ENCODE measurements at regions of chr4 and their contacts with region 1.

Region 1: GRCh38 chr4:168923526-168924194 is 86.4 kb downstream of the CBR4 start:
- DNase-seq: peak; percentile 86
- ATAC-seq: peak; percentile 75
- H3K4me3 ChIP-seq: no peak overlapping the region
- H3K27ac ChIP-seq: no peak overlapping the region
- H3K4me1 ChIP-seq: peaks cover 2% of the 10 kb centered on the region; the same call in 1 of the 2 replicates
- H3K27me3 ChIP-seq: no peaks in the 10 kb centered on the region
- CTCF ChIP-seq: peak; percentile 72
- POLR2A ChIP-seq: no peak
- RAD21 ChIP-seq: peak; percentile 76

Region 2: GRCh38 chr4:168605411-168605810 is 318.2 kb before region 1 on chr4:
- CTCF ChIA-PET with region 1: no interaction called
- POLR2A ChIA-PET with region 1: no interaction called
- dilution Hi-C with region 1: no loop called
- in situ Hi-C with region 1: no loop called
- intact Hi-C with region 1: no loop called
- DNase-seq: peak; percentile 83
- ATAC-seq: peak; percentile 86
- H3K4me3 ChIP-seq: no peak overlapping the region
- H3K27ac ChIP-seq: no peak overlapping the region
- H3K4me1 ChIP-seq: peaks cover 4% of the 10 kb centered on the region; the same call in 1 of the 2 replicates
- H3K27me3 ChIP-seq: no peaks in the 10 kb centered on the region
- CTCF ChIP-seq: no peak
- POLR2A ChIP-seq: no peak
- RAD21 ChIP-seq: no peak

Region 3: DNA sequence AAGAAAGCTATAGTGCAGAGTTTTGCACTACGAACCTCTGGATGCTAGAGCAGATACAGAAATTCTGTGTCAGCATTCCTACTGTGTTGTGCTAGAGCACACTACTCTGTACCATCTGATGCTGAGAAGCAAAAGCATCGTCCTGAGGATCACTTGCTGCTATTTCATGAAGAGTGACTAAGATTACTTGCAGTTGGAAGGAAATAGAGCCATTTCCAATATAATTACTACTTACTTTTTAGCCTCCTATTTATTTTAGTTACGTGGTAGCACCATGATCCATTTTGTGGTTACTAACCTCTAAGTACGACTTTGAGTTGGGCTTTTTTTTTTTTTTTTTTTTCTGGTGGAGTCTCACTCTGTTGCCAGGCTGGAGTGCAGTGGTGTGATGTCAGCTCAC is 200.1 kb before region 1 on chr4:
- CTCF ChIA-PET with region 1: no interaction called
- POLR2A ChIA-PET with region 1: interaction called, 14 read pairs
- dilution Hi-C with region 1: no loop called
- in situ Hi-C with region 1: no loop called
- intact Hi-C with region 1: no loop called
- DNase-seq: peak; percentile 56
- ATAC-seq: no peak; the same call in 1 of the 2 replicates
- H3K4me3 ChIP-seq: no peak overlapping the region
- H3K27ac ChIP-seq: no peak overlapping the region
- H3K4me1 ChIP-seq: peaks cover 15% of the 10 kb centered on the region
- H3K27me3 ChIP-seq: no peaks in the 10 kb centered on the region
- CTCF ChIP-seq: no peak
- POLR2A ChIP-seq: no peak
- RAD21 ChIP-seq: no peak

Region 4: DNA sequence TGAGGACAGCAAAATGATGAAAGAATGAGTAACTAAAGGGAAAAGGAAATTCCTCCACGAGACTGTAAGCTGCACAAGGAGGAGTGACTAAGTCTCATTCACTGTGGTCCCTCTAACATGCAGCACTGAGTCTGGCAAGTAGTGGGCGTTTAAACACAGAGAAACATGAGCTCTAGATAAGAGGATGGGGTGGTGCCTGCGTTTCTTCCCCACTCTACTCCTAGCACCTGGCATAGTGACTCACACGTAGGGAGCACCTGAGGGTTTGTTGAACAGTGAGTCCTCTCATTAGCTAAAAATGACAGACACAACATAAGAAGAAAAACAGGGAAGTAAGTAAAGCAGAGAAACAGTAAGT is 192.2 kb after region 1 on chr4:
- CTCF ChIA-PET with region 1: no interaction called
- POLR2A ChIA-PET with region 1: no interaction called
- dilution Hi-C with region 1: no loop called
- in situ Hi-C with region 1: no loop called
- intact Hi-C with region 1: loop called (anchors 5 kb)
- DNase-seq: peak; percentile 99
- ATAC-seq: peak; percentile 97
- H3K4me3 ChIP-seq: no peak overlapping the region
- H3K27ac ChIP-seq: peak overlapping the region; percentile 71; the same call in 1 of the 2 replicates
- H3K4me1 ChIP-seq: peaks cover 18% of the 10 kb centered on the region
- H3K27me3 ChIP-seq: no peaks in the 10 kb centered on the region
- CTCF ChIP-seq: peak; percentile 49
- POLR2A ChIP-seq: peak; percentile 34; the same call in 1 of the 2 replicates
- RAD21 ChIP-seq: peak; percentile 60

Region 5: DNA sequence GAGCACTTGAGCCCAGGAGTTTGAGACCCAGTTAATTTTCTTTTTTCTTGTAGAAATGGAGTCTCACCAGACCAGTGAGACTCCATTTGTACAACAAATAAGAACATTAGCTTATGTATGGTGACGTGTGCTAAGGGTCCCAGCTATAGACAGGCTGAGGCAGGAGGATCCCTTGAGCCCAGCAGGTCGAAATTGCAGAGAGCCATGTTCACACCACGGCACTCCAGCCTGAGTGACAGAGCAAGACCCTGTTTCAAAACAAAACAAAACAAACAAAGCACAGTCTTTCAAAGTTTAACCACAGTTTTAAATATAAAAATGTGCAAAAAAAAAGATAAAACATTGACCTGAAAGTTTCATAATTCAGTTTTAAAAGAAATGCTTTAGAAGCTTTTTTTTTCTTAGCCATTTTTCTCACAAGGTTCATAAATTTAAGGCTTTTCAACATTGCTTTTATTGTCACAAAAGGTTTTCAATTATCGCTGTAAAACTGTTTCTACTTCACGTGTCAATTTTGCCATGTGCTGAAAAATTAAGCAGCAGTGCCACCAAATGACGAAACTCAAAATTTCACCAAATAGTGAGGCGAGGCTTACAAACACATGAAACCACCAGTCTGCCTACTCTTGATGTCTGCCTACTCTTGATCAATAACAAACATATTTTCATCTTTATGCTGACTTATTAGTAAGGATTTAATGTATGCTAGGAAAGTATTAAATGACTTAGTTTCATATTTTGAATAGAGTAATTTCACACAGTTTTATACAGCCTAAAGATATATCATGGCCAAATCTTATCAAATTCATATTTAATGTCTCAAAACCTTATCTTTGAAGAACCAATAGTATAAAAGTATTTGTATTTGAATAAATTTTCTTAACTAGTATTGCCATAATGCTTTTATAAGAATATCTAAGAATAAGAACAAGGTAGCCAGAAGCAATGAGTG is 562.4 kb after region 1 on chr4:
- CTCF ChIA-PET with region 1: interaction called, 7 read pairs
- POLR2A ChIA-PET with region 1: no interaction called
- dilution Hi-C with region 1: no loop called
- in situ Hi-C with region 1: loop called (anchors 5 kb)
- intact Hi-C with region 1: loop called (anchors 1 kb)
- DNase-seq: peak; percentile 71
- ATAC-seq: peak; percentile 70
- H3K4me3 ChIP-seq: no peak overlapping the region
- H3K27ac ChIP-seq: no peak overlapping the region; the same call in 1 of the 2 replicates
- H3K4me1 ChIP-seq: peaks cover 3% of the 10 kb centered on the region
- H3K27me3 ChIP-seq: no peaks in the 10 kb centered on the region
- CTCF ChIP-seq: peak; percentile 77
- POLR2A ChIP-seq: no peak
- RAD21 ChIP-seq: peak; percentile 86

Region 6: DNA sequence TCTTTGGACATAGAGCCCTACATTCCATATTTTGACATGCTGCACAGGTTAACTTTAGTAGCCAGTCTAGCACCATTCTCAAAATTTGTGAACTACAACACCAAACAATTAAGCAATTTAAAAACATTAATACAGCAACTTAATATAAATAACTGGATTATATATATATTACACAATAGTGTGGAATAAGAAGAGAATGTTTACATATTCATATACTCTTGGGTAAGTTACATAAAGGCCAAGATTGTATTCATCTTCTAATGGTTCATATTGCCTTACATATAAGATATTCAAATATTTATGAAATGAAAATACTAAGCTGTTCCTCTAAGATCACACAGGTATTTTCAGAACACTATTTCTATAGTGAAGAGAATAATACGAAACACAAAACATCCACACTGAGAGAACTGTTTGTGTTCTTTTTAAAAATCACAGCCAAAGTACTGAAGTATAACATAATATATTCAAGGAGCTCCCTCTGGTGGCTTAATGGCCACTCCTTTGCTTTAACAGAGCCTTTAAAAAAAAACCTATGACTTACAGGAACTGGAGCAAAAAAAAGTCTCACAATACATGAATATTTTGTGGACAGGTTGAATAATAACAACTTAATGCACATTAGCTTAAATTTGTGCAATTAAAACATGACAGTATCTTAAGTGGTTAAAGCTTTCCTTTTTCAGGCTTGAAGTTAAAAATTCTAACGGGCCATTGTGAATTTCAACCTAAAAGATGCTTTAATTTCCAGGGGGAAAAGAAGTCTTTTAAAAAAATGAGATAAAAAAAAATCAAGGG is 642.6 kb after region 1 on chr4:
- CTCF ChIA-PET with region 1: no interaction called
- POLR2A ChIA-PET with region 1: no interaction called
- dilution Hi-C with region 1: no loop called
- in situ Hi-C with region 1: no loop called
- intact Hi-C with region 1: loop called (anchors 5 kb)
- DNase-seq: peak; percentile 67
- ATAC-seq: peak; percentile 92
- H3K4me3 ChIP-seq: no peak overlapping the region
- H3K27ac ChIP-seq: no peak overlapping the region
- H3K4me1 ChIP-seq: no peaks in the 10 kb centered on the region
- H3K27me3 ChIP-seq: no peaks in the 10 kb centered on the region
- CTCF ChIP-seq: peak; percentile 74
- POLR2A ChIP-seq: no peak
- RAD21 ChIP-seq: peak; percentile 60

Region 7: DNA sequence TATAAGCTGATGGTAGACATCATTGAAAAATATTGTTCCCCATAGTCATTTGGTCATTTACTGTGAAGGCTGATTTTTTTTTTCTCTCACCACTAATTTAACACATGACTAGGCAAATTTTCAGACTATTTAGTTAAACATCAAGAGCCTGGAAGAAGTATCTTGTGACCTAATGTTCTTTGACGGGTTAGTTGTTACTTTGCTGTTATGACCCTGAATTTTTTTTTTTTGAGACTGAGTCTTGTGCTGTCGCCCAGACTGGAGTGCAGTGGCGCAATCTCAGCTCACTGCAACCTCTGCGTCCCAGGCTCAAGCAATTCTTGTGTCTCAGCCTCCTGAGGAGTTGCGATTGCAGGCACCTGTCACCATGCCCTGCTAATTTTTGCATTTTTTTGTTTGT is 767.1 kb after region 1 on chr4:
- CTCF ChIA-PET with region 1: no interaction called
- POLR2A ChIA-PET with region 1: no interaction called
- dilution Hi-C with region 1: no loop called
- in situ Hi-C with region 1: no loop called
- intact Hi-C with region 1: no loop called
- DNase-seq: no peak
- ATAC-seq: no peak
- H3K4me3 ChIP-seq: no peak overlapping the region
- H3K27ac ChIP-seq: no peak overlapping the region
- H3K4me1 ChIP-seq: no peaks in the 10 kb centered on the region
- H3K27me3 ChIP-seq: no peaks in the 10 kb centered on the region
- CTCF ChIP-seq: no peak
- POLR2A ChIP-seq: no peak
- RAD21 ChIP-seq: no peak